ENCODE measurements at regions of chr2 and their contacts with region 1.

Region 1: DNA sequence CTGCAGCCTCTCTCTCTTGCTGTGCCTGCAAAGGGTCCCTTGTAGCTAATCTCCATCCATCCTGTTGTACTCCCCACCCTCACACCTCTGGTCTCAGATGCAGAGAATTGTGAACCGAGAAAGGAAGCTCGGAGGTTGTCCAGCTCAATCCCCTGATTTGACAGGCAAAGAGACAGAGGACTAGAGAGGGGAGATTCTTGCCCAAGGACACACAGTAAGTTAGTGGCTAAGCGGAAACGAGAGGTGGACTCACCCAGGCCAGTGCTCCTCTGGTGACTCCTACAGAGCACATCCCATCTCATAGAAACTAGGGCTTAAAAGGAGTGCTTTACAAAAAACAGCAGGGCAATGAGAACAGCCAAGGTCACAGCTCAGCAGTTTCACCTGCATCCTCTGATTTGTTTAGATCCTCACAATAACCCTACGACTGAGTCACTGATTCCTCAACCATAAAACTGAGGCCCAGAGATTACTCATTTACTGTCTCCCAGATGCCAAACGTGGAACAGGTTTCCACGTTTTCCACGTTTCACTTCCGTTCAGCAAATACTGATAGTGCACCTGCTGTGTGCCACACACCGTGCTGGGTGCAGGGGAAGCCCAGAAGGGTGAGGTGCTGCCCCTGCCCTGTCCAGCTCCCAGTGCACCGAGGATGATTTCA is 22.1 kb downstream of the EHD3 start:
- DNase-seq: peak; percentile 58
- ATAC-seq: peak; percentile 70
- H3K4me3 Mint-ChIP-seq: peak overlapping the region; percentile 72
- H3K27ac Mint-ChIP-seq: peak overlapping the region; percentile 84
- H3K4me1 Mint-ChIP-seq: peaks cover 85% of the 10 kb centered on the region
- H3K27me3 Mint-ChIP-seq: no peaks in the 10 kb centered on the region
- CTCF ChIP-seq: no peak

Region 2: DNA sequence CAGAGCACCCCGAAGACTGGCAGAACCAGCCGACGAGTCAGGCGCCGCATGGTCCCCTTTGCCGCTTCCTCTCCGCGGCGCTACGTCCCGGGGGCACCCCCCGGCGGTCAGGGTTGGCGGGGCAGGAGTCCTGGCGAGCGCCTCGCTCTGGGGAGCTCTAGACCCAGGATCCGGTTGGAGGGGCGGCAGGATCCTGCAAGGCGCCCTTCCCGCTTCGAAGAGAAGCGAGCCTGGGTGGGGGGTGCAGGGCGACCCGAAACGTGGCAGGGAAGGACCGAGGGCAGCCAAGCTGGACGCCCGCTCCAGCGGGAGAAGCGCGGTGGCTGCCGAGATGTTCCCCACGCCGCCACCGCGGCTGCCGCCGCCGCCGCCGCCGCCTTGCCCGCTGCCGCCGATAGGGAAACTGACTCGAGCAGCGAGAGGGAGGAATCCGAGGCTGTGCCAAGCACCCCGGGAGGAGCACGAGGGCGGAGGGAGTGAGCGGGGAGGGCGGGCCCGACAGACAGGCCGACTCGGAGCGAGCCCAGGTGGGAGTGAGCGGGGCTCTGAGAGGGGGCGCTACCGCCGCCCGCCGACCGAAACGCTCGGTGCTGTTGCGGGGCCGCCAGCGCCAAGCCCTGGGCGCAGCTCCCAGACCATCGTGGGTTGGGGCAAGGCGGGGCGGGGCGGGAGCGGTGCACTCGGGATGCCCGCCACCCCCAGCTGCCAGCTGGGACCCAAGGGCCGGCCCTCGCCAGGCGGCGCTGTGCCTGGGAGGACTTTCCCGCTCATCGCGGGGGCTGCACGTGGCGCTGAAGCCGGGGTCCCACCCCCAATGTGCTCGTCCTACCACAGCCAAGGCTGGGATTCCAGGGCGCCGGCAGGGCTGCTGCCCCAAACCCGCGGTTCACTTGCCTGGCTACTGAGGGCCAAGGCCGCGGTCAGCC is 117.7 kb before region 1 on chr2 and contains the start of gene GALNT14:
- CTCF ChIA-PET with region 1: interaction called, 13 read pairs
- POLR2A ChIA-PET with region 1: no interaction called
- intact Hi-C with region 1: loop called (anchors 1 kb)
- DNase-seq: peak; percentile 64
- ATAC-seq: peak; percentile 76
- H3K4me3 Mint-ChIP-seq: peak within 1 kb of the TSS; percentile 85
- H3K27ac Mint-ChIP-seq: no peak within 1 kb of the TSS
- H3K4me1 Mint-ChIP-seq: peaks cover 8% of the 10 kb centered on the region
- H3K27me3 Mint-ChIP-seq: peaks cover 5% of the 10 kb centered on the region
- CTCF ChIP-seq: no peak
- total RNA-seq, gene GALNT14: 6.6 and 7.9 TPM in 2 replicates

Region 3: DNA sequence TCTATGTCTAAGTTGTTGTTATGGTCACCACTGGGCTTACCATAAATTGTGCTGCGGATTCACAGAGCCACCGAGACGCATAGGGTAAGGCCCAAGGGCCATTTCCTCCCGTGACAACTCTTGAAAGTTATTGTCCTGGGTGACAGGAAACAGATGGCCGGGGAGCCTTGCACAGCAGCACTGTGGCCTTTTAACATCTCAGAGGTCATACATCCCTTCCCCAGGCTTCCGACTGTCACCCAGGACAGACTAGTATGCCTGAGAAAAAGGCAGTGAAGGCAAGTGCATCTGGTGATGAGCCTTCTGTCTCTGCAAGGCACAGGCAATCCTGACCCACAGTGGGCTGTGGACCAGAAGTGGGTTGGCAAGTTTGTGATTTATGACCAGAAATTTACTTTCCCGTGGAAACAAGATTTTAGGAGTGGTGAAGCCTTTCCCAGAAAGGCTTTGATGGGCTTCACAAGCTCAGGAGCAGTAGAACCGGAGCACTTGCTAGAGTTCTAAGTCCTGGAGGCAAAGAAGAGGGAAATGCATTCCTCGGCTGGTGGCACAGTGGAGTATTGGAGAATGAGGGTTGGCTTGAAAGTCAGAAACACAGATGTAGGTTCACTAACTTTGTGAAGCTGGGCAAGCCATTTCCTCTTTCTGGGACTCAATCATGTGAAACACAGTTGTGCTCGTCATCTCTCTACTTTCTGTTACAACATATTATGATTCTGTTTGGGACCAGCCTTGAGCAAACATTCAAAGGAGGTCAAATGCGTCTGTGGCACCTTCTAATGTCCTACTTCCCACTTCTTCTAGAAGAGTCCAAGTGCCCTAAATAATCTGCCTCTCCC is 36.7 kb before region 1 on chr2:
- CTCF ChIA-PET with region 1: interaction called, 5 read pairs
- POLR2A ChIA-PET with region 1: interaction called, 70 read pairs
- intact Hi-C with region 1: loop called (anchors 1 kb)
- DNase-seq: peak; percentile 41
- ATAC-seq: peak; percentile 81
- H3K4me3 Mint-ChIP-seq: peak overlapping the region; percentile 79
- H3K27ac Mint-ChIP-seq: peak overlapping the region; percentile 99
- H3K4me1 Mint-ChIP-seq: peaks cover 97% of the 10 kb centered on the region
- H3K27me3 Mint-ChIP-seq: no peaks in the 10 kb centered on the region
- CTCF ChIP-seq: no peak

Region 4: DNA sequence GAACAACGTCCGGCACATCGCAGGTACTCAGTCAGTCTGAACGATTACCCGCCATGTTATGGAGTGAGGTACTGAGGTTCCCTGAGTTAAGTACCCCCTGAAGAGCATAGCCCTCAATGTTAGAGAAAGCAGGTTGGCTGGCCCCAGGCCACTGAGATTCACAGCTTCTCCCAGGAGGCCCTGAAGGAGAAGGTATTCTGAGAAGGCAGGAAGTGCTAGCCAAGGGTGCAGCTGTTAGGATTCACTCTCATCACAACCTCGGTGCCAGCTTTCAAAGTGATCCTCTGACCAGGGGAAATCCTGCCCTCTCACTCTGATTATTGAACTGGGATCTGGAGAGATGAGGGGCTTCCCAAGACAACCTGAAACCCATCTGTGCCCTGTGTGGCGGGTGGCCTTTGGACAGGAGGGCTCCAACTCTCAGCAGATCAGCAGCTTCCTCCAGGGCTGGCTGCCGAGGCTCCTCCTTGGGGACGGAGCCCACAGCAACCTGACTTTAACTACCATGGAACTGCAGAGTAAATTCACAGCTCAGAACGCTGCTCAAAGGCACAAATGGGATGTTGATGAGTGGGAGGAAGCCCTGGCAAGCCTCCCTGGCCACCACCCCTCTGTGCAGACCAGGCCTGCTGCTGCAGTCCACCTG is 14.3 kb before region 1 on chr2:
- CTCF ChIA-PET with region 1: no interaction called
- POLR2A ChIA-PET with region 1: interaction called, 6 read pairs
- intact Hi-C with region 1: loop called (anchors 1 kb)
- DNase-seq: no peak
- ATAC-seq: peak; percentile 40
- H3K4me3 Mint-ChIP-seq: no peak overlapping the region
- H3K27ac Mint-ChIP-seq: peak overlapping the region; percentile 53
- H3K4me1 Mint-ChIP-seq: peaks cover 49% of the 10 kb centered on the region
- H3K27me3 Mint-ChIP-seq: no peaks in the 10 kb centered on the region
- CTCF ChIP-seq: no peak

Region 5: GRCh38 chr2:31275976-31276375 is 19.9 kb after region 1 on chr2:
- CTCF ChIA-PET with region 1: no interaction called
- POLR2A ChIA-PET with region 1: no interaction called
- intact Hi-C with region 1: no loop called
- DNase-seq: no peak
- ATAC-seq: no peak
- H3K4me3 Mint-ChIP-seq: no peak overlapping the region
- H3K27ac Mint-ChIP-seq: no peak overlapping the region
- H3K4me1 Mint-ChIP-seq: peaks cover 6% of the 10 kb centered on the region
- H3K27me3 Mint-ChIP-seq: peaks cover 2% of the 10 kb centered on the region
- CTCF ChIP-seq: no peak

Measured in activated B cell treated with CpG ODN at 0.5 μM for 24 hours (primary cell).